ENCODE measurements at regions of chr22 and their contacts with region 1.

Region 1: DNA sequence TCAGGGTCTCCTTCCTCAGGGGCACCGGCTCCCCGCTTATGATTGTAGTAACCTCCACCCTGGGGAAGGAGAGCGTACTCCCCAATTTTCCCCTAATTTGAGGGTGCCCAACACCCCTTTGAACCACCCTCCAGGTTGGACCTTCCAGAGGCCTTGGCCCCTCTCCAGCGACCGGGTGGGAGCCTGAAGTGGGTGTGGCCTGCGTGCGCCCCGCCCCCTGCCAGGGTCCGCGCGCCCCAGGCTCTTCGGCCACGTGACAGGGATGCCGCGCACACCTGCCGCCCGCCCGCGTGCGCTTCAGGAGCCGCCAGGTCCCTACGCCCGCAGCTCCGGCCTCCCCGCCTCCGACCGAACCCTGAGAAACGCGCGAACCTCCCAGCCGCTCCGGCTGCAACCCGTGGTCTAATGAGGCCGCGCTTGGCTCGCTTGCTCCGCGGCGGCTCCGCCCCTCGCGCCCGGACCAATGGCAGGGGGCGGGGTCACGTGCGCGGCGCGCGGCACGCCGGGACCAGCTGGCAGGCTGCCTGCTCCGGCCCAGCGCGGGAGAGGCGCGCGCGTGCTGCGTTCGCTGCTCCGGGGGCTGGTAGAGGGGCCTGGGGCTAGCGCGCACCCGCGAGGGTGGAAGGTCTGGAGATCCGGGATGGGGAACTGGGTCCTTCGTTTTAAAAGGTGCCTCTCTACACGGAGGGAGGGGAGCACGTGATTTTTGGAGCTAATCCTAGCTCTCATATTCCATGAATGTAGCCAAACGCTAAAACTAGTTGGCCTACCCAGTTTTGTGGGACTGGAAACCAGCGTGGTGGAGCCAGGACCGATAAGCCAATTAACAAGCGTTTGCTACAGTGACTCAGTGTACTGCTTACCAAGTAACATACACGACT is at the start of gene FOXRED2:
- DNase-seq: peak; percentile 90 to 94 (median 93)
- ATAC-seq: peak; percentile 92
- H3K4me3 ChIP-seq: peak within 1 kb of the TSS; percentile 53
- H3K27ac ChIP-seq: peak within 1 kb of the TSS; percentile 66
- H3K4me1 ChIP-seq: peaks cover 19 to 31% of the 10 kb centered on the region in 2 experiments
- H3K27me3 ChIP-seq: no peaks in the 10 kb centered on the region
- CTCF ChIP-seq: no peak
- EP300 ChIP-seq: no peak
- POLR2A ChIP-seq: peak; percentile 79
- RAD21 ChIP-seq: no peak
- polyA plus RNA-seq, gene FOXRED2: 5.4 to 5.7 TPM

Region 2: DNA sequence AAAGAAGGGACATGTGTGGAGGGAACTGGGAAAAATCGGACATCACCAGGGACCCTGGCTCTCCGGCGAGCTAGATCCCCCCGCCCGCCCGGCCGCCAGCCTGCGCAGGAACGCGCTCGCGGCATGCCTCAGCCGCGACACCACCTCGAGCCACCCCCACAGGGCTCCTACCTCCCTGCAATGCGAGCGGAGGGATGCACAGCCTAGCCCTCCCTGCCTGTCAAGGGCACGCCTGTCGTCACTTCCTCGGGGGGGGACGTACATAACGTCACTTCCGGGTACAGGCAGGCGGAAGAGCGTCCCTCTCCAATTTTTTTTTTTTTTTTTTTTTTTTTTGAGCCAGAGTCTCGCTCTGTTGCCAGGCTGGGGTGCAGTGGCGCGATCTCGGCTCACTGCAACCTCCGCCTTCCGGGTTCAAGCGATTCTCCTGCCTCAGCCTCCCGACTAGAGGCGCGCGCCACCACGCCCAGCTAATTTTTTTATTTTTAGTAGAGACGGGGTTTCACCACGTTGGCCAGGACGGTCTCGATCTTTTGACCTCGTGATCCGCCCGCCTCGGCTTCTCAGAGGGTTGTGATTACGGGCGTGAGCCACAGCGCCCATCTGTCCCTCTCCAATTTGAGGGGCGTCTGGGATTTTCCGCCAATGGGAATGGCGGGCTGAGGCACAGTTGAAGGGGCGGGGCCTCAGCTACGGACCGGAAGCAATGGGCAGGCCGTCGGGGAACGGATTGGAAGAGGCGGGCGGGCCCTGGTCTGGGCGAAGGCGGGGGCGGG is 25.3 kb before region 1 on chr22 and contains the start of gene TXN2:
- CTCF ChIA-PET with region 1: no interaction called
- POLR2A ChIA-PET with region 1: interaction called, 4 read pairs
- in situ Hi-C with region 1: no loop called
- intact Hi-C with region 1: loop called (anchors 2 kb)
- DNase-seq: peak; percentile 89 to 95 (median 90)
- ATAC-seq: peak; percentile 91
- H3K4me3 ChIP-seq: peak within 1 kb of the TSS; percentile 57
- H3K27ac ChIP-seq: peak within 1 kb of the TSS; percentile 88
- H3K4me1 ChIP-seq: peaks cover 22 to 25% of the 10 kb centered on the region in 2 experiments; a peak in 4 of 5 replicates
- H3K27me3 ChIP-seq: no peaks in the 10 kb centered on the region
- CTCF ChIP-seq: no peak
- EP300 ChIP-seq: no peak
- POLR2A ChIP-seq: peak; percentile 92
- RAD21 ChIP-seq: no peak
- polyA plus RNA-seq, gene TXN2: 306 to 399 TPM

Region 3: GRCh38 chr22:36520423-36520822 is 13.5 kb after region 1 on chr22:
- CTCF ChIA-PET with region 1: no interaction called
- POLR2A ChIA-PET with region 1: interaction called, 13 read pairs
- in situ Hi-C with region 1: no loop called
- intact Hi-C with region 1: no loop called
- DNase-seq: no peak
- ATAC-seq: no peak
- H3K4me3 ChIP-seq: no peak overlapping the region
- H3K27ac ChIP-seq: no peak overlapping the region
- H3K4me1 ChIP-seq: no peaks in the 10 kb centered on the region
- H3K27me3 ChIP-seq: no peaks in the 10 kb centered on the region
- CTCF ChIP-seq: no peak
- EP300 ChIP-seq: no peak
- POLR2A ChIP-seq: no peak
- RAD21 ChIP-seq: no peak

Region 4: DNA sequence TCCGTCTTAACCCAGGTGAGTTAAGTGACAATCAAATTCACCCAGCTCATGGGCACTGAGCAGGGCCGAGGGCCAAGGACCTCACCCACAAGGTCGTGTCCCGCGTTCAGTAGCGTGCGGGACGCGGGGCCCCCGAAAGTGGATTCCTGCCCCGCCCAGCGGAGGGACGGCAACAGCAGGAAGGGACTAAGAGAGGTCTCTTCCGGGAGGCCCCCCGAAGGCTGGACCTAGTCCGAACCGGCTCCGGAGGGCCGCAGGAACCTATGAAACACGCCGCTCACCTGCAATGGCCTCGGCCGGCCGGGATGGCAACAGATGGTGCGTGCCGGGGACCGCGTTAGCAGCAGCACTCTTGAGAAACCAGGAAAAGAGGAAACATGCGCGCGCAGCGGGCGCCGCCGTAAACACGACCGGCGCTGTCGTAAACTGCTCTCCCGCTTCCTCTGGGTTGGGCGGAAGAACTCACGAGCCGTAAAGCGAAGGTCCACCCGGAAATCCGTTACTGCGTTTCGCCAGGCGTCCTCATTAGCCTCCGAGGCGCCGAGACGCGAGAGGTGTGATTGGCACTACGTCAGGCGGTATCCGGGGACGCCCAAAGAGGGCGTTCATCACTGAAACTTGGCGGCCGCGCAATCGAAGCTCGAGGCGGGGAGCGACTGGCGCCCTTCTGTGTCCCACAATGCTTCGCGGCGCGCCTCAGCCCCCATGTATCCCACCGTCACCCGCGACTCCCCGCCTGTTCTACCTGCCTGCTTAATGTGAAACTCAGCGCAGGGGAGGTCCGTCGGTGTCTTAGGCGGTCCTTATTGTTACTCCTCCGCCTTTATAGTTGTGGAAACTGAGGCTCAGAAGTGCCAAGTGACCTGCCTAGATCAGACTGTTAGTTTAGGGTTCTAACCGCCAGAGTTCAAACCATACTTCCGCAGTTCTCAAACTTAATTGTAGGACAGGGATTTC is 22.2 kb after region 1 on chr22 and contains the start of gene EIF3D:
- CTCF ChIA-PET with region 1: no interaction called
- POLR2A ChIA-PET with region 1: interaction called, 19 read pairs
- in situ Hi-C with region 1: no loop called
- intact Hi-C with region 1: no loop called
- DNase-seq: peak; percentile 78 to 98 (median 82)
- ATAC-seq: peak; percentile 96
- H3K4me3 ChIP-seq: peak within 1 kb of the TSS; percentile 99
- H3K27ac ChIP-seq: peak within 1 kb of the TSS; percentile 98
- H3K4me1 ChIP-seq: peaks cover 3 to 4% of the 10 kb centered on the region in 2 experiments; a peak in 3 of 5 replicates
- H3K27me3 ChIP-seq: no peaks in the 10 kb centered on the region
- CTCF ChIP-seq: peak in 2 of 3 experiments; percentile 8 to 14; a peak in 1 of 6 replicates
- EP300 ChIP-seq: no peak; the same call in 1 of the 2 replicates
- POLR2A ChIP-seq: peak; percentile 95
- RAD21 ChIP-seq: no peak
- polyA plus RNA-seq, gene EIF3D: 199 to 351 TPM

Measured in K562 (cell line).